Transverse colon (tissue), 4 donors: ENCODE measurements at regions of chr11 and their contacts with region 1.

Region 1: GRCh38 chr11:45147017-45147728 is 734 bp downstream of the PRDM11 start:
- DNase-seq: peak; percentile 96
- H3K4me3 ChIP-seq: peak overlapping the region; percentile 38 to 70 (median 54)
- H3K27ac ChIP-seq: peak overlapping the region; percentile 95 to 99 (median 99)
- H3K4me1 ChIP-seq: peaks cover 8 to 24% (median 18%) of the 10 kb centered on the region in 4 donors
- H3K27me3 ChIP-seq: no peaks in the 10 kb centered on the region
- CTCF ChIP-seq: no peak
- EP300 ChIP-seq: no peak
- POLR2A ChIP-seq: peak; percentile 78

Region 2: DNA sequence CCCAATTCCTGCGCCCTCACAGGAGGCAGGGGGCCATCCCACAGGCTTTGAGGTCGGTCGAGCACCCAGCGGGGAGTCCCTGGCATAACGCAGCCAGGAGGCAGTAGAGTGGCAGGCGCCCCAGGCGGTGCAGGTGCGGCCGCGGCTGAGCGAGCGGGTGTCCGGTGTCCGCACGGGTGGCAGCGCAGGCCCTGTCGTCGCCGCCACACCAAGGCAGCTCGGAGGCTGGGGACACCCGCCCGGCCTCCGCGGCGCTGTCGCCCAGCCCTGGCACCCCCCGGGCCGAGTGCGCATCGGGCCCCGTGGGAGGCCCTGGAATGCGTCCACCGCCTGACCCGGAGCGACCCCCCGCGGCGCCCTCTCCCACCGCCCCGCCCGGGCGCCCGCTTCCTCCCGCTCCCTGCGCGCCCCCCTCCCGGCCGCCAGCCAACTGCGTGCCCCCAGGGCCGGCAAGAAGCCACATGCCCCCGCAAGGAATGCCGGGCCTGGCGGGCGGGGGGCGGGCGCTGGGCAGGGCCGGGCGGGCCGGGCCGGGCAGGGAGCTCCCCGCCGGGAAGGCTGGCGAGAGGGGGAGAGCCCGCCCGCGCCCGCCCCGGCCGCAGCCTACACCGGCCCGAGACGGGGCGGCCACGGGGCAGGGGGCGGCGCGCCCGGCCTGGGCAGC is 33.1 kb after region 1 on chr11:
- in situ Hi-C with region 1: no loop called
- intact Hi-C with region 1: loop called (anchors 1 kb)
- DNase-seq: peak; percentile 73
- H3K4me3 ChIP-seq: peak overlapping the region; percentile 39 to 72 (median 64)
- H3K27ac ChIP-seq: peak overlapping the region; percentile 86 to 93 (median 90)
- H3K4me1 ChIP-seq: peaks cover 3 to 21% (median 15%) of the 10 kb centered on the region in 4 donors
- H3K27me3 ChIP-seq: no peaks in the 10 kb centered on the region
- CTCF ChIP-seq: peak; percentile 49 to 72 (median 56)
- EP300 ChIP-seq: no peak
- POLR2A ChIP-seq: peak; percentile 38

Region 3: DNA sequence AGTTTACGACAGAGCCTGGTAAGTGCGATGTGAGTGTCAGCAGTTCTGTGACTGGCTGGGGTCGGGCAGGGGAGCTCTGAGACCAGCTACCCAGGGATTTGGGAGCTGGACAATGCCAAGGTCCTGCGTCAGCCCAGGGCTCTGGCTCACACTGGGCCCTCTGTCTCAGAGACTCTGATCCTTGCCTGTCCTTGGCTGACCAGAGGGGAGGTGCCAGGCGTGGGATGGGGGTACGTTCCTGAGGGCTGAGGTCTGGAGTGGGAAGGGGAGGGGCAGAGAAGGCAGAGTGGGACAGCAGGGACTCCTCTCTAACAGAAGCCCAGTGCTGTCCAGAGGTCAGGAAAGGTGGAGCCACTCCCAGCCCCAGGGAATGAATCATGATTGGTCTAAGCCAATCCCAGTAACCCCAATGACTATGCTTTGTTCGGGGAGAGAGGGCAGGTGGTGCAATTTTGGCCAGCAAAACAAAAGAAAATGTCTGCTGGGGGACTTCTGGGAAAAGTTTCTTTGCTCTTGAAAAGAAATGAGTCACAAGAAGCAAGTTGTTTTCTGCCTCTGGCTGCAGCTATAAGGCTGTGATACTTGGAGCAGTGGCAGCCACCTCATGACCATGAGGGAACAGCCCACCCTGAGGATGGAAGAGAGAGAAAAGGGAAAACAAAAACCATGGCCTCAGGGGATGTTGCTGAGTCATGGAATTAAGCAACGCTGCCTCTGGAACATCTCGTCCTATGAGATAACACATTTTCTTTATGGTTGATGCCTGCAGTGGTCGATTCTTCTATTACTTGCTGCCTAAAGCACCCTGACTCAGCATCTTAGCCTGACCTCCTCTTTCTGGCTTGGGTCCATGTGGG is 409.9 kb after region 1 on chr11:
- in situ Hi-C with region 1: no loop called
- intact Hi-C with region 1: loop called (anchors 5 kb)
- DNase-seq: no peak
- H3K4me3 ChIP-seq: no peak overlapping the region
- H3K27ac ChIP-seq: no peak overlapping the region
- H3K4me1 ChIP-seq: no peaks in the 10 kb centered on the region
- H3K27me3 ChIP-seq: no peaks in the 10 kb centered on the region
- CTCF ChIP-seq: no peak
- EP300 ChIP-seq: no peak
- POLR2A ChIP-seq: no peak